CD14-positive monocyte (primary cell): ENCODE measurements at regions of chr7 and their contacts with region 1.

Region 1: GRCh38 chr7:98021588-98022351 is 31.8 kb upstream of the OCM2 start:
- DNase-seq: peak; percentile 52 to 70 (median 64)
- H3K4me3 ChIP-seq: no peak overlapping the region
- H3K4me3 Mint-ChIP-seq: no peak overlapping the region
- H3K27ac ChIP-seq: no peak overlapping the region
- H3K27ac Mint-ChIP-seq: no peak overlapping the region
- H3K4me1 ChIP-seq: peaks cover 0 to 5% of the 10 kb centered on the region in 2 donors
- H3K4me1 Mint-ChIP-seq: peaks cover 11% of the 10 kb centered on the region
- H3K27me3 ChIP-seq: no peaks in the 10 kb centered on the region
- H3K27me3 Mint-ChIP-seq: peaks cover 10 to 24% (median 10%) of the 10 kb centered on the region in 3 donors
- CTCF ChIP-seq: peak; percentile 94

Region 2: GRCh38 chr7:97298561-97298960 is 723.2 kb before region 1 on chr7:
- intact Hi-C with region 1: no loop called
- DNase-seq: no peak
- H3K4me3 ChIP-seq: no peak overlapping the region
- H3K4me3 Mint-ChIP-seq: no peak overlapping the region
- H3K27ac ChIP-seq: no peak overlapping the region
- H3K27ac Mint-ChIP-seq: no peak overlapping the region
- H3K4me1 ChIP-seq: no peaks in the 10 kb centered on the region
- H3K4me1 Mint-ChIP-seq: no peaks in the 10 kb centered on the region
- H3K27me3 ChIP-seq: no peaks in the 10 kb centered on the region
- H3K27me3 Mint-ChIP-seq: peaks cover 0 to 4% (median 0%) of the 10 kb centered on the region in 3 donors
- CTCF ChIP-seq: no peak

Region 3: DNA sequence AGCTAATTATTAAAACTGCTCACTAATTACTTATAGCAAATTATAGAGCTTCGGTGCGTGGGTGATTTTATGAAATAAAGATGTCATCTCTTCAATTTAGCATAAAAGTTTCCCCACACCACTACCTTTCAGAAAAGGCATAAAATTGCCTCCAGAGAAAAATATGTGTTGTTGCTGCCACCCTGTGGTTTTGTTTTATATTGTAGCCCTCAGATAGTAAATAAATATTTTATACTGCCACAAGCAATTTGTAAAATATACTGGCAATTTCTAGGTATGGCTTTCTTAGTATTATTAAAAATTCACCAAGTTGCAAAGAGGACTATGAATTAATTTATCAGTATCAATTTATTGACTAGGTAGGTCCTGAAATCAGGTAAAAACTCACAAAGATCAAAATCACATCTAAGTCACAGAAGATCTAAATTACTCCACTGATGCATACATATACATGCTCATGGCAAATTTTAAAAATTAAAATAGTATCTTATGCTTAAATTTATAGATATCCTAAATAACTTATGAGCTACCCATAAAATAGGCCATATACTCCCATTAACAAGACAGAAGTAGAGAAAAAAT is 176.1 kb before region 1 on chr7:
- intact Hi-C with region 1: no loop called
- DNase-seq: no peak
- H3K4me3 ChIP-seq: no peak overlapping the region
- H3K4me3 Mint-ChIP-seq: no peak overlapping the region
- H3K27ac ChIP-seq: no peak overlapping the region
- H3K27ac Mint-ChIP-seq: no peak overlapping the region
- H3K4me1 ChIP-seq: no peaks in the 10 kb centered on the region
- H3K4me1 Mint-ChIP-seq: no peaks in the 10 kb centered on the region
- H3K27me3 ChIP-seq: no peaks in the 10 kb centered on the region
- H3K27me3 Mint-ChIP-seq: peaks cover 0 to 4% (median under 1%) of the 10 kb centered on the region in 3 donors
- CTCF ChIP-seq: peak; percentile 41

Region 4: DNA sequence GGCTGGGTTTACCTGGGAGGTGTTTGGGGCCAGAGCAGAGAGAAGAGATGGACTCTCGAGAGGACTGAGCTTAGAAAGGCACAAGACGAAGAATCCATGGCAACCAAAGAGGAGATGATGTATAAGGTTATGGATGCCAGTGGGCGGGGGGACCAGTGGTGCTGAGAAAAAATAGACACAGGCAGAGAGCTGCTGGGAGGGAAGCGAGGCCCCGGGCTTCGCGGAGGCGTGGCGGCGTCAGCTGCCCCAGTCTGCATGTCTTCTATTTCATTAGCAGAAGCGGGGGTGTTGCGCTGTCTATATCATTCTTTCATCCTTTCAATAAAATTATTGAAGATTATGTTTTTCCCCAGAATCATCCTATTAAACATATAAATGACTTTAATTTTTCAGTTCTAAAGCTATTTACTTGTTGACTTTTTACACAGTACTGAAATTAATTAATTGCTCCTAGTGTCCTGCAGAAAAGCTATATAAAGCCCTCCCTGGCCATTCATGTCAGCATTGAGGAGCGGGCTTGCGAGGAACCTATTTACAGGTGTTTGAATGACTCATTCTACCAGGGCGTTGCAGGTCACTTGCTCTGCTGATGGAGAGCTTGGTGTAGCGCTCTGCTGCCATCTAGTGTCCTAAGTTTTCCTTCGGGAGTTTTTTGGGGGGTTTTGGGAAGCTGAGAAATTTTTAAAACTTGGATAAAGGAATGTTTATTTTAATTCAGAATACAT is 146.6 kb after region 1 on chr7:
- intact Hi-C with region 1: loop called (anchors 1 to 2 kb)
- DNase-seq: peak; percentile 43 to 71 (median 44)
- H3K4me3 ChIP-seq: no peak overlapping the region
- H3K4me3 Mint-ChIP-seq: peak overlapping the region in 1 of 2 donors; percentile 72
- H3K27ac ChIP-seq: no peak overlapping the region
- H3K27ac Mint-ChIP-seq: no peak overlapping the region
- H3K4me1 ChIP-seq: peaks cover 3 to 4% of the 10 kb centered on the region in 2 donors
- H3K4me1 Mint-ChIP-seq: peaks cover 19% of the 10 kb centered on the region
- H3K27me3 ChIP-seq: peaks cover 5 to 28% of the 10 kb centered on the region in 2 donors
- H3K27me3 Mint-ChIP-seq: peaks cover 23 to 38% (median 25%) of the 10 kb centered on the region in 3 donors
- CTCF ChIP-seq: peak; percentile 83